Activated T-helper 2 cell treated with anti-CD3 and anti-CD28 coated beads, Interferon-gamma antibody, Interleukin-2, Interleukin-4, amounts not matched to agents 10 μg/mL and 5 μg/mL and 100 μg/mL, durations not matched to agents 14 hours and 24 hours and 36 hours (primary cell): ENCODE measurements at regions of chr5 and their contacts with region 1.

Region 1: GRCh38 chr5:142014911-142015584 is 2.2 kb upstream of the GNPDA1 start:
- DNase-seq: peak; percentile 30
- H3K4me3 Mint-ChIP-seq: peak overlapping the region; percentile 41
- H3K27ac Mint-ChIP-seq: peak overlapping the region; percentile 96
- H3K4me1 Mint-ChIP-seq: peaks cover 61% of the 10 kb centered on the region
- H3K27me3 Mint-ChIP-seq: no peaks in the 10 kb centered on the region

Region 2: DNA sequence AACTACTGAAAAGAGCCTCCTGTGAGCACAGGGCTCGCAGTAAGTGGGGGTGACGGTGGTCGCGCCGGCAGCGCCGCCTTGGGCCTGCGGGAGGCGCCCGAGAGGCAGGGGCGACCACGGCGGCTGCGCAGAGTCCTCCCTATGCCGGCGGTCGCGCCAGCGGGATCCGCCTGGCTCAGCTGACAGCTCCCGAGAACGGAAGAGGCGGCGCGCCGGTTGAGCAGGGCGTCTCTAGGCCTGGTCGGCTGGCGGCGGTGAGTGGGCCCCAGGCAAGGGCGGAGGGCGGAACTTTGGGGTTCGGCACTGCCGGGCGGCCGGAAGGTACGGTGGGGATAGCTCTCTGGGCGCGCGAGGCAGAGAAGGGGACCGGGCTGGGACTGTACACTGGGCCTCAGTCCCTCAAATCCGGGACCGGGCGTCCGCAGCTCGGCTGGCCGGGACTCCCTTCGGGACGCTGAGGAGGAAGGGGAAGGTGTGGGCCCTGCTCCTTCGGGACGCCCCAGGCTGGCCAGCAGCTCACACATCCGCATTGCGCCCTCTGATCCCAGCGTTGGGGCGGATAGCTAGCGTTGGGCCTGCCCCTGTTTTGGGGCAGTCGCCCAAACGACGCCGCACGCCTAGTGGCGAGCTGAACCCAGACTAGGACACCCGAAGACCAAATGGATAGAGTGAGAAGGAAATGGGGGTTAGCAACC is 46.0 kb before region 1 on chr5 and contains the start of gene RNF14:
- intact Hi-C with region 1: loop called (anchors 1 kb)
- DNase-seq: peak; percentile 95
- H3K4me3 Mint-ChIP-seq: peak within 1 kb of the TSS; percentile 91
- H3K27ac Mint-ChIP-seq: peak within 1 kb of the TSS; percentile 93
- H3K4me1 Mint-ChIP-seq: peaks cover 25% of the 10 kb centered on the region
- H3K27me3 Mint-ChIP-seq: no peaks in the 10 kb centered on the region
- total RNA-seq, gene RNF14: 22.0 and 24.1 TPM in 2 replicates

Region 3: DNA sequence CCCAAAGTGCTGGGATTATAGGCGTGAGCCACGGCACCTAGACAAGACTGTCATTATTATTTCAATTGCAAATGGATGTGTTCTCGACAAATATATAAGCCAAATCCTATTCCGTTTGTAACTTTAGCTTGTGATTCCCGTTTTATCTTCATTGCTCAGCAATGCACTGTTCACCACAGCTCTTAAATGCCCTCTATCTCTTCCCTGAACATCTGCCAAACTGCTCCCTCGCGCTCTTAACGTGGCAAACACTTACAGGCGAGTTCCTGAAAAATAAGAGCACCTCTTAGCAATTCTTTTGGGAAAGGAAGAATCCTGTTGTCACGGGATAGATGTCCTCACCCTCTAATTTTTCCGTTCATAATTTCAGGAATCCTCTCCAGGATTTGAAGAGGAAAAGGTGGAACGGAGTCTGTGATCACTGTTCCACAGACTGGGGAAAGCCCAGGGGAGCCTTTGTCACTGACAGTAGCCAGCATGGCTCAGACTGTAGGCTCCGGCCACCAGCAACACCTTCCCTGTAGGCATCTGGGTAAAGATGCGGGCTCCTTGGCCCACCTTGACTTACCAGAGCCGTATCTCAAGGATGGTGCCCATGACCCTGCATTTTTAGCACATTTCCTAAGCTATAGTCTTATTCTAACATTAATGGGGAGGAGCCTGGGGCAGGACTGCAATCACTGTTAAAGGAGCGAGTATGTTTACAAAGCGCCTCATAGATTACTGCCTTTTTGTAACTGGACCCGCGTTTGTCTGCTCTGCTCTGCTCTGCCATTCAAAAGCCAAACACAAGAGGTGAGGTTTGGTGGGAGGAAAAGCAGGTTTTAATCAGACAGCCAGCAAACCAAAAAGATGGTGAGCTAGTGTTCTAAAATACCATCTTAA is 17.9 kb after region 1 on chr5:
- intact Hi-C with region 1: no loop called
- DNase-seq: no peak
- H3K4me3 Mint-ChIP-seq: no peak overlapping the region
- H3K27ac Mint-ChIP-seq: no peak overlapping the region
- H3K4me1 Mint-ChIP-seq: peaks cover 11% of the 10 kb centered on the region
- H3K27me3 Mint-ChIP-seq: no peaks in the 10 kb centered on the region

Region 4: DNA sequence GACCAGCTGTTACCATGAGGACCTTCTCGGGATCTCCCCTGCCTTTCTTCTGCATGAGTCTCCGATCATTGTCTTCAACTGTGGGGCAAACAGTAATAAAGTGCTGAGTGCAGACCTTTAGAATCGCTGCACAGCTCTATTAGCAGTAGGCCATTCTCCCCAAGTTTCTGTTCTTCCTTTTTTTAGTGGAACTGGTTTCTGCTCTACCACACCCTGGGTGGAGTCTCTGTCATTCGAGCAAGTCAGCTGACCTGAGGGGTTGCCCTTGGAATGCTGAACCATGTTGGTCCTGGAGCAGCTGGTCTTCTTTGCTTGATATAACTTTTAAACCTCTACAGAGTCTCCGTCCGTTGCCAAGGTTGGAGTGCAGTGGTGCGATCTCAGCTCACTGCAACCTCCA is 31.1 kb after region 1 on chr5:
- intact Hi-C with region 1: no loop called
- DNase-seq: no peak
- H3K4me3 Mint-ChIP-seq: no peak overlapping the region
- H3K27ac Mint-ChIP-seq: no peak overlapping the region
- H3K4me1 Mint-ChIP-seq: no peaks in the 10 kb centered on the region
- H3K27me3 Mint-ChIP-seq: no peaks in the 10 kb centered on the region

Region 5: GRCh38 chr5:142073362-142073988 is 58.4 kb after region 1 on chr5:
- intact Hi-C with region 1: loop called (anchors 2 kb)
- DNase-seq: no peak
- H3K4me3 Mint-ChIP-seq: no peak overlapping the region
- H3K27ac Mint-ChIP-seq: peak overlapping the region; percentile 96
- H3K4me1 Mint-ChIP-seq: peaks cover 42% of the 10 kb centered on the region
- H3K27me3 Mint-ChIP-seq: no peaks in the 10 kb centered on the region

Region 6: GRCh38 chr5:142095651-142096330 is 80.7 kb after region 1 on chr5:
- intact Hi-C with region 1: loop called (anchors 1 kb)
- DNase-seq: peak; percentile 72
- H3K4me3 Mint-ChIP-seq: peak overlapping the region; percentile 14
- H3K27ac Mint-ChIP-seq: peak overlapping the region; percentile 88
- H3K4me1 Mint-ChIP-seq: peaks cover 44% of the 10 kb centered on the region
- H3K27me3 Mint-ChIP-seq: no peaks in the 10 kb centered on the region

Region 7: DNA sequence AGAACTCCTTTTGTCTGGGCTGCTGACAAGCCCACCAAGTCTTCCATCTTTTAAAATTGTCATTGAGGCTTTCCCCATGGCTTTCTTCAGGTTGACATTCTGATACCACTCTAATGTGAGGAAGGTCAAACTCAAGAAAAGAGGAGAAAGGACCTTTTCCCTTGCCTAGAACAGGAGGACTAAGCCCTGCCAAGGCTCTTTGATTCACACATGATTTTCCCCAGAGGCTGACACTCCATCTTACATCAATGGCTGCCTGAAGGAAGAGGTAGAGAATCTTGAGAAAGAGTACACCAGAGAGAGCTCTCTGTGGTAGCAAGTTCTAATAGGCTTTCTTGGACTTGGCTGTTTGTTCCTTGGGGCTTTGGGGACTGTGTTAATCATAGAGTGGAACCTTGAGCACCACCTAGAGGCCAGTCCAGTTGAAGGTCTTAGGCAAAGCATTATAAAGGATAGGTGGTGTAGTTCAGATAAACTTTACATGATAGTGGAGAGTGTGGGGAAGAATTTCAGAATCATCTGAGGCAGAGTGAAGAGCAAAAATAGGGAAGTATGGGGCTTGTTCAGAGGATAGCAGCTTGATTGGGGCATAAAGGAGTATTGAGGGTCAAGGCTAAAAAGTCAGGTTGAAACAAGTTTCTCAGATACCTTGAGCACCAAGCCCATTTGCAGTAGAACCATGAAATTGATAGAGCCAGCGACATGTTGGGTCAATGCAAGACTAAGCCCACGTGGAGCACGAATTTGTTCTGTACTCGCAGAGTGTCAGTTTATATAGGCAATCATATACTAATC is 130.3 kb after region 1 on chr5:
- intact Hi-C with region 1: loop called (anchors 1 kb)
- DNase-seq: peak; percentile 45
- H3K4me3 Mint-ChIP-seq: no peak overlapping the region
- H3K27ac Mint-ChIP-seq: no peak overlapping the region
- H3K4me1 Mint-ChIP-seq: peaks cover 3% of the 10 kb centered on the region
- H3K27me3 Mint-ChIP-seq: no peaks in the 10 kb centered on the region